ENCODE measurements at regions of chr17 and their contacts with region 1.

Region 1: DNA sequence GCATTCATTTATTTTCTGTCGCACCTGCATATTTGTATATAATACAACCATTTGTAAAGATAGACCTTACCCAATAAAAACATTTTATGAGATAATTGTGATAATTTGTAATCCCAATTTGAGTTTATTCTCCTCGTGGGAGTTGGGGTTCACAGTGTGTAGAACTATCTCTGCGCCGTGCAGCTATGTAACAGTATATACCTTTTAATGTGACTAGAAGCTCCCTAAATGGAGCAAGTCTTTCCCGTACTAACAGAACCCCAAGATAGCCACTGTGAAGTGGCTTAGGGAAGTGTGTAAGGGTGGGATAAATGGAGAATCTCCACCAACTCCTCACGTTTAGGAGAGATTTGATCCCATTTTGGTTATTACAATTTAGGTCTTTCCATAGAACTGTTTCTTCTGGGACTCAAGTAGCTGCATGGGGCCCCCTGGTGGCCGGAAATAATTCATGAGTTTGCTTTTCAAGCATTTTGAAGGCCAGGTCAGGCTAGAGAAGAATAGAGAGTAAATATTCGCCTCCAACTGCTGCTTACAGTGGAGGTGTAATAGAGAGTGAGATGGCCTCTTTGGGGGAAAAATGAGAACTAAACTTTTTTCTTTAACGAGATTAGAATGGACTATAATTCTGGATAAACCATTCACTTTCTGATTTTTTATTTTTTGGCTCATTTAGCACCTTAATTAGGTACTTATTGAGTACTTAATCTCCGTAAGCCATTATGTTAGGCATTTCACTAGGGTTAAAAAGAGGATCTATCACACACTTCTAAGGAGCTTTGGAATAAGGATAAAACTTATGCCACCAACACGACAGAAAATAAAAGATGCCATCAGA is 4.5 kb downstream of the TMEM100 start:
- DNase-seq: peak; percentile 54
- H3K4me3 ChIP-seq: no peak overlapping the region; a peak in 1 of 4 replicates
- H3K27ac ChIP-seq: peak overlapping the region in 1 of 2 experiments; percentile 13; a peak in 1 of 4 replicates
- H3K4me1 ChIP-seq: peaks cover 2 to 8% of the 10 kb centered on the region in 2 experiments; a peak in 2 of 4 replicates
- H3K27me3 ChIP-seq: no peaks in the 10 kb centered on the region
- CTCF ChIP-seq: peak; percentile 99
- EP300 ChIP-seq: no peak
- RAD21 ChIP-seq: peak; percentile 97

Region 2: GRCh38 chr17:55487695-55488429 is 230.3 kb before region 1 on chr17:
- CTCF ChIA-PET with region 1: no interaction called
- POLR2A ChIA-PET with region 1: no interaction called
- DNase-seq: no peak
- H3K4me3 ChIP-seq: no peak overlapping the region
- H3K27ac ChIP-seq: no peak overlapping the region
- H3K4me1 ChIP-seq: no peaks in the 10 kb centered on the region
- H3K27me3 ChIP-seq: no peaks in the 10 kb centered on the region
- CTCF ChIP-seq: no peak
- EP300 ChIP-seq: no peak
- RAD21 ChIP-seq: no peak

Region 3: GRCh38 chr17:55533608-55534007 is 184.5 kb before region 1 on chr17:
- CTCF ChIA-PET with region 1: interaction called, 246 read pairs
- POLR2A ChIA-PET with region 1: no interaction called
- DNase-seq: no peak
- H3K4me3 ChIP-seq: no peak overlapping the region
- H3K27ac ChIP-seq: peak overlapping the region in 1 of 2 experiments; percentile 26; a peak in 2 of 4 replicates
- H3K4me1 ChIP-seq: peaks cover 0 to 13% of the 10 kb centered on the region in 2 experiments; a peak in 2 of 4 replicates
- H3K27me3 ChIP-seq: no peaks in the 10 kb centered on the region
- CTCF ChIP-seq: no peak
- EP300 ChIP-seq: no peak
- RAD21 ChIP-seq: no peak

Region 4: GRCh38 chr17:55607731-55608341 is 110.3 kb before region 1 on chr17:
- CTCF ChIA-PET with region 1: interaction called, 46 read pairs
- POLR2A ChIA-PET with region 1: no interaction called
- DNase-seq: no peak
- H3K4me3 ChIP-seq: no peak overlapping the region
- H3K27ac ChIP-seq: no peak overlapping the region
- H3K4me1 ChIP-seq: peaks cover 7 to 10% of the 10 kb centered on the region in 2 experiments; a peak in 3 of 4 replicates
- H3K27me3 ChIP-seq: no peaks in the 10 kb centered on the region
- CTCF ChIP-seq: no peak
- EP300 ChIP-seq: peak in 1 of 2 experiments; percentile 45; a peak in 1 of 4 replicates
- RAD21 ChIP-seq: no peak

Region 5: DNA sequence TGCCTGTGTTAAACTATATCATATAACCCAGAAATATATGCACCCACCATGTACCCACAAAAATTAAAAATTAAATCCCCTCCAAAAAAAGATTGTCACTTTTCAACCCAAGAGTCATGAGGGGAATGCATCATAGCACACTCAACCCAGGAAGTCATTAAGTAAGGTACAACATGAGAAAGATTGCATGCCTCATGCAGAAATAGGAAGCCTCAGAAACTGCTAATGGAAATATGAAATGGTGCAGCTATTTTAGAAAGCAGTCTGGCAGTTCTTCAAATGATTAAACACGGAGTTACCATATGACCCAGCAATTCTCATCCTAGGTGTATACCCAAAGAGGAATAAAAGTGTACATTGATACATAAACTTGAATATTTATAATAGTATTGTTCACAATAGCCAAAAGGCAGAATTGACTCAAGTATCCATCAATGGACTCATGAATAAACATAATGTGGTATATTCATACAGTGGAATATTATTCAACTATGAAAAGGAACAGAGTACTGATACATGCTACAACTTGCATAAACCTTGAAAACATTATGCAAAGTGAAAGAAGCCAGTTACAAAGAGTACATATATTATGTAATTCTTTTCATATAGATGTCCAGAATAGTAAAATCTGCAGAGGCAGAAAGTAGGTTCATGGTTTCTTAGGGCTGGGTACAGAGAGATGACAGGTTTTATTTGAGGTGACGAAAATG is 65.8 kb before region 1 on chr17:
- CTCF ChIA-PET with region 1: interaction called, 19 read pairs
- POLR2A ChIA-PET with region 1: no interaction called
- DNase-seq: no peak
- H3K4me3 ChIP-seq: no peak overlapping the region
- H3K27ac ChIP-seq: no peak overlapping the region
- H3K4me1 ChIP-seq: peaks cover 5 to 17% of the 10 kb centered on the region in 2 experiments; a peak in 3 of 4 replicates
- H3K27me3 ChIP-seq: no peaks in the 10 kb centered on the region
- CTCF ChIP-seq: no peak
- EP300 ChIP-seq: no peak
- RAD21 ChIP-seq: no peak

Region 6: DNA sequence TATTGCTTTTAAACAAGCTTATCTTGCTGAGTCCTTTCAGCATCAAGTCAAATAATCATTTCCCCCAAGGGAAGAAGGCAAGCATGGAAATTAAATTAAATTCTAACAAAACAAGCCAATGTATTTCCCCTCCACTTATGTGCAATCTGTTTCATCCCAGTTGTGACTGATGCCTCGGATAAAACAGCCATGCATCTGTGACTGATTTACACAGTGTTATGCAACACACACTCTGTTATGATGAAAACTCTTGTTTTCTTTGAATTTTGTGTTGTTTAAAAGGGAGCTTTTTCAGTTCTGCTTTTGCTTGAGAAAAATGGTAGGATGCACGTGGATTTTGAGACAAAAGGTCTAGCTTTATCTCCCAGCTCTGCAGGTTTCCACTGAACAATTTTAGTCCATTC is 28.0 kb before region 1 on chr17:
- CTCF ChIA-PET with region 1: interaction called, 46 read pairs
- POLR2A ChIA-PET with region 1: no interaction called
- DNase-seq: peak; percentile 58
- H3K4me3 ChIP-seq: no peak overlapping the region
- H3K27ac ChIP-seq: peak overlapping the region in 1 of 2 experiments; percentile 99; a peak in 2 of 4 replicates
- H3K4me1 ChIP-seq: peaks cover 0 to 54% of the 10 kb centered on the region in 2 experiments; a peak in 3 of 4 replicates
- H3K27me3 ChIP-seq: no peaks in the 10 kb centered on the region
- CTCF ChIP-seq: no peak
- EP300 ChIP-seq: peak; percentile 22 to 99; a peak in 2 of 4 replicates
- RAD21 ChIP-seq: peak; percentile 38

Region 7: GRCh38 chr17:55735731-55736405 is 17.8 kb after region 1 on chr17:
- CTCF ChIA-PET with region 1: interaction called, 165 read pairs
- POLR2A ChIA-PET with region 1: no interaction called
- DNase-seq: peak; percentile 52
- H3K4me3 ChIP-seq: no peak overlapping the region; a peak in 1 of 4 replicates
- H3K27ac ChIP-seq: no peak overlapping the region
- H3K4me1 ChIP-seq: peaks cover 14 to 39% of the 10 kb centered on the region in 2 experiments
- H3K27me3 ChIP-seq: no peaks in the 10 kb centered on the region
- CTCF ChIP-seq: peak; percentile 89
- EP300 ChIP-seq: no peak
- RAD21 ChIP-seq: peak; percentile 77

Region 8: GRCh38 chr17:55859301-55859795 is 141.2 kb after region 1 on chr17:
- CTCF ChIA-PET with region 1: no interaction called
- POLR2A ChIA-PET with region 1: no interaction called
- DNase-seq: no peak
- H3K4me3 ChIP-seq: no peak overlapping the region
- H3K27ac ChIP-seq: no peak overlapping the region
- H3K4me1 ChIP-seq: no peaks in the 10 kb centered on the region
- H3K27me3 ChIP-seq: no peaks in the 10 kb centered on the region
- CTCF ChIP-seq: no peak
- EP300 ChIP-seq: no peak
- RAD21 ChIP-seq: no peak

Region 9: GRCh38 chr17:55889271-55889670 is 171.2 kb after region 1 on chr17:
- CTCF ChIA-PET with region 1: no interaction called
- POLR2A ChIA-PET with region 1: no interaction called
- DNase-seq: no peak
- H3K4me3 ChIP-seq: no peak overlapping the region
- H3K27ac ChIP-seq: no peak overlapping the region
- H3K4me1 ChIP-seq: no peaks in the 10 kb centered on the region
- H3K27me3 ChIP-seq: no peaks in the 10 kb centered on the region
- CTCF ChIP-seq: no peak
- EP300 ChIP-seq: no peak
- RAD21 ChIP-seq: no peak

Measured in SK-N-SH (cell line).